IMR-90 (cell line): ENCODE measurements at regions of chr18 and their contacts with region 1.

Region 1: GRCh38 chr18:42533009-42533575 is 578.1 kb downstream of the PIK3C3 start:
- DNase-seq: no peak
- ATAC-seq: no peak
- H3K4me3 ChIP-seq: no peak overlapping the region
- H3K27ac ChIP-seq: no peak overlapping the region
- H3K4me1 ChIP-seq: no peaks in the 10 kb centered on the region
- H3K27me3 ChIP-seq: no peaks in the 10 kb centered on the region
- CTCF ChIP-seq: no peak
- POLR2A ChIP-seq: no peak
- RAD21 ChIP-seq: no peak

Region 2: GRCh38 chr18:43465483-43465882 is 932.4 kb after region 1 on chr18:
- CTCF ChIA-PET with region 1: no interaction called
- POLR2A ChIA-PET with region 1: no interaction called
- dilution Hi-C with region 1: no loop called
- in situ Hi-C with region 1: no loop called
- intact Hi-C with region 1: loop called (anchors 5 kb)
- DNase-seq: no peak
- ATAC-seq: no peak
- H3K4me3 ChIP-seq: no peak overlapping the region
- H3K27ac ChIP-seq: no peak overlapping the region
- H3K4me1 ChIP-seq: no peaks in the 10 kb centered on the region
- H3K27me3 ChIP-seq: no peaks in the 10 kb centered on the region
- CTCF ChIP-seq: no peak
- POLR2A ChIP-seq: no peak
- RAD21 ChIP-seq: no peak